MCF 10A (cell line): ENCODE measurements at regions of chr6 and their contacts with region 1.

Region 1: GRCh38 chr6:3751730-3752542 is 423 bp upstream of the PXDC1 start:
- DNase-seq: peak; percentile 67
- H3K4me3 Mint-ChIP-seq: peak overlapping the region; percentile 81
- H3K27ac Mint-ChIP-seq: no peak overlapping the region
- H3K4me1 Mint-ChIP-seq: peaks cover 27% of the 10 kb centered on the region
- H3K27me3 Mint-ChIP-seq: no peaks in the 10 kb centered on the region
- CTCF ChIP-seq: peak; percentile 24

Region 2: GRCh38 chr6:3566812-3567211 is 185.1 kb before region 1 on chr6:
- CTCF ChIA-PET with region 1: no interaction called
- POLR2A ChIA-PET with region 1: no interaction called
- intact Hi-C with region 1: no loop called
- DNase-seq: peak; percentile 49
- H3K4me3 Mint-ChIP-seq: no peak overlapping the region
- H3K27ac Mint-ChIP-seq: no peak overlapping the region
- H3K4me1 Mint-ChIP-seq: no peaks in the 10 kb centered on the region
- H3K27me3 Mint-ChIP-seq: no peaks in the 10 kb centered on the region
- CTCF ChIP-seq: no peak

Region 3: DNA sequence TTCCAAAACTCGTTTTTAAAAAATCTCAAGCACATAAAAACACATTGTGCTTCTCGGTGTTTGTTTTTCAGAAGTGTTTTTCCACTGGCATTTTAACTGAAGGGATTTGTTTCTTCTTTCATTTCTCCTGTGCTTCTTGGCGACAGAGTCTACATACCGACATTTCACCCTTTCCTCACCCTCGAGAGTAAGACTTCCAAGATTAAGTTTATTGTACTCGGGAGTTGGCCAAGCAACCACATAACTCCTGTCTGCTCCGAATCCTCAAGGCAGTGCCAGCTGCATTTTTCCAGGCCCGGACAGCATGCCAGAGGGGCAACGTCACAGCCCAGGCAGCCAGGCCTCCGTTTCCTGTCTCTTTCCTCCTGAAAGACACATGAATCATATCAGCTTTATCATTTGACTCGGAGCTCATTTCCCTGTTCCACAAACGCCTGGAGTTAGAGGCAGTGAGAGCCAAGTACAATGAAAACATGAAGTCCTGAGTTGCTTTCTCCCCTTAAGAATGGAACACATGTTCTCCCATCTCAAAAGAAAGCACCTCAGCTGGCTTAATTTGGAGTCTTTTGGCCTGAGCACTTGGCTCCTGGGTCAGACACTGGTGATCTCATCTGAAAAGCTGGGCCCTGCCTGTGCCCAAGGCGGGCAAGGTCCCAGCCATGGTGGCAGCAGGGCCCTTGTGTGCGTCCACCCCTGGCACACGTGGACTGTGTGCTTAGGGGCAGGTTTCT is 74.1 kb after region 1 on chr6:
- CTCF ChIA-PET with region 1: interaction called, 29 read pairs
- POLR2A ChIA-PET with region 1: interaction called, 18 read pairs
- intact Hi-C with region 1: loop called (anchors 1 kb)
- DNase-seq: peak; percentile 94
- H3K4me3 Mint-ChIP-seq: peak overlapping the region; percentile 66
- H3K27ac Mint-ChIP-seq: peak overlapping the region; percentile 92
- H3K4me1 Mint-ChIP-seq: peaks cover 35% of the 10 kb centered on the region
- H3K27me3 Mint-ChIP-seq: no peaks in the 10 kb centered on the region
- CTCF ChIP-seq: no peak

Region 4: GRCh38 chr6:3913077-3913957 is 161.4 kb after region 1 on chr6:
- CTCF ChIA-PET with region 1: interaction called, 16 read pairs
- POLR2A ChIA-PET with region 1: interaction called, 13 read pairs
- intact Hi-C with region 1: no loop called
- DNase-seq: peak; percentile 99
- H3K4me3 Mint-ChIP-seq: peak overlapping the region; percentile 41
- H3K27ac Mint-ChIP-seq: peak overlapping the region; percentile 93
- H3K4me1 Mint-ChIP-seq: peaks cover 48% of the 10 kb centered on the region
- H3K27me3 Mint-ChIP-seq: no peaks in the 10 kb centered on the region
- CTCF ChIP-seq: no peak

Region 5: GRCh38 chr6:3929281-3929798 is 177.4 kb after region 1 on chr6:
- CTCF ChIA-PET with region 1: interaction called, 41 read pairs
- POLR2A ChIA-PET with region 1: interaction called, 17 read pairs
- intact Hi-C with region 1: loop called (anchors 1 kb)
- DNase-seq: no peak
- H3K4me3 Mint-ChIP-seq: no peak overlapping the region
- H3K27ac Mint-ChIP-seq: no peak overlapping the region
- H3K4me1 Mint-ChIP-seq: peaks cover 15% of the 10 kb centered on the region
- H3K27me3 Mint-ChIP-seq: no peaks in the 10 kb centered on the region
- CTCF ChIP-seq: no peak

Region 6: DNA sequence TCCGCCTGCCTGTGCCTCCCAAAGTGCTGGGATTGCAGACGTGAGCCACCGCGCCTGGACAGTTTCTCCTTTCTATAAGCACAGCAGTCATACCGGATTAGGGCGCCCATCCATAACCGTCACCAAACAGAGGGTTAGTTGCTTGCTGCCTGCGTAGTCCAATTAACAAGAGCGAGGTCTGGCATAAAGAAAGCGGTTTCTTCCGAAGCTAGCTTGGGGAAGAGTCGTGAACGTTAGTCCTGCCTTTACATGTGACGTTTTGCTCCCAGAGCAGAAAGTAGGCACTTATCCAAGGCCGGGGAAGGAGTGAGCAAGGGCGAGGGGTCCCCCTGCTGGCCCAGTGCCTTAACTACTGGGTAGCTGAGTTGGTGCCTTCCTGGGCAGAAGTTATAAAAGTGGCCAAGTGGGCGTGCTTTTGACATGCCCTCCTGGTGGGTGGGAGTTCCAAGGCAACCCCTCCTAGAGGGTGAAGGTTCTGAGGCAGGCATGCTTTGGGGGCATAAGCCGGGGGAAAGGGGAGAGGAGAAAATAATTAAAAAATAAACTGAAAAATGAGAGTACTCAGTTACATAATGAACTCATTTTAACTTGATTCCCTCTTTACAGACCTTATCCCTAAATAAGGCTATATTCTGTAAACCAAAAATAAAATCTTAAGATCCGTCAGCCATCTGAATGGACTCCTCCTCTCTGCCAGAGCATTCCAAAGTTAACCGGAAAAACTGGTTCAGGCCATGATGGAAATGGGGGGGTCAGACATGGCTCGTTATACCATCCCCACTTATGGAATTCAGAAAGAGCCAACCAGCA is 239.0 kb after region 1 on chr6:
- CTCF ChIA-PET with region 1: interaction called, 6 read pairs
- POLR2A ChIA-PET with region 1: interaction called, 4 read pairs
- intact Hi-C with region 1: loop called (anchors 2 kb)
- DNase-seq: peak; percentile 87
- H3K4me3 Mint-ChIP-seq: peak overlapping the region; percentile 62
- H3K27ac Mint-ChIP-seq: peak overlapping the region; percentile 43
- H3K4me1 Mint-ChIP-seq: peaks cover 16% of the 10 kb centered on the region
- H3K27me3 Mint-ChIP-seq: no peaks in the 10 kb centered on the region
- CTCF ChIP-seq: peak; percentile 77

Region 7: DNA sequence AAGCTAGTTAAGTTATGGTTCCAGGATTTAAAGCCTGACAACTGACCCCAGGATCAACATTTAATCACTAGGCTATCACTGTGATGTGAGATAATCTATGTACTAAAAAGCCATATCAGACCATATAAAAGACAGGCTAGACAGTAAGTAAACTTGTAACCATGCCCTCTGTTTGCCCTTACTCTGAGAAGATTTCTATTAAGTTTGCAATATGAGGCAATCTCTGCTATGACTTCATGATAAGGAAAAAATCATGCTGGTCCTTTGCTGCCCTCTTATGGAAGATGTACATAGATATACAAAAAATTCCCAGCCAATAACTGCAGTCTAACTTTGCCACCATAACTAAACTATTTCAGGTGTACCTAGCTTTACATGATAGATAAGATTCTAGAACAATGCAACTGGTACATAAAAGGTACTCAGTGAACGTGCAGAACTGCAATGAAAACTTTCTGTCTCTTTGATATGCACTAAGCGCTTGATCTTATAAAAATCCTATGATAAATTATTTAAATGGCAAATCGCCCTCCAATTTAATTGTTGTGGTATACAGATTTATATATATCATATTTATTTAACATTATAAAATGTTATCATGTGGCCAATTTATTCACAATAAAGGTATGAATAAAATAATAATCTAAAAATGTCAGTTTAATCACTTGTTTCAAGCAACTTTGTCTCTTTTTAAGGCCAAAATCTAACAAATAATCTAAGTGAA is 256.6 kb after region 1 on chr6:
- CTCF ChIA-PET with region 1: interaction called, 12 read pairs
- POLR2A ChIA-PET with region 1: interaction called, 3 read pairs
- intact Hi-C with region 1: loop called (anchors 1 kb)
- DNase-seq: peak; percentile 79
- H3K4me3 Mint-ChIP-seq: no peak overlapping the region
- H3K27ac Mint-ChIP-seq: no peak overlapping the region
- H3K4me1 Mint-ChIP-seq: peaks cover 17% of the 10 kb centered on the region
- H3K27me3 Mint-ChIP-seq: no peaks in the 10 kb centered on the region
- CTCF ChIP-seq: peak; percentile 55